ENCODE measurements at regions of chr5 and their contacts with region 1.

Region 1: DNA sequence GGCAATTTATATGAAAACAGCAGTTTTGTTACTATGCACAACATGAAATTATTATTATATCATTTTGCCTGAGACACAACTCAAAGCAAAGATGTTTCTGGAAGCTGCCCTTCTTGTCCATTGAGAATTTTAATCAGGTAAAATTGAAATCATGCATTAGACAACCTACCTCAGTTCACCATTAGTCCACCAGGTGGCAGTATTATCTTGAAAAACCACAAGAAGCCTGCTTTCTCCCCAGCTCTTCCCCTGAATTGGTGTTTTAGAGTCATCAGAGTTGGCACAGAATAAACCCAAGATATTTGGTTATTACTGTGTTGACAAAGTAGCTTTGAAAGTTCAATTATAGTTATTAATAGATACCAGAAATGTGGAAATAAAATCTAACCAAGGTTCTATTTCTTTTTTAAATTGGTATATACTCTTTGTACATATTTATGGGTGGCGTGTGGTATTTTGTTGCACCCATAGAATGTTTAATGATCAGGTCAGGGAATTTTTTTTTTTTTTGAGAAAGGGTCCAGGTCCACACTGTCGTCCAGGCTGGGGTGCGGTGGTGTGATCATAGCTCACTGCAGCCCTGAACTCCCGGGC is 25.7 kb downstream of the UTP15 start:
- DNase-seq: peak in 7 of 9 donors; percentile 46 to 71 (median 61)
- ATAC-seq: peak; percentile 82
- H3K4me3 ChIP-seq: no peak overlapping the region
- H3K4me3 Mint-ChIP-seq: no peak overlapping the region
- H3K27ac ChIP-seq: no peak overlapping the region
- H3K27ac Mint-ChIP-seq: no peak overlapping the region
- H3K4me1 ChIP-seq: no peaks in the 10 kb centered on the region
- H3K4me1 Mint-ChIP-seq: no peaks in the 10 kb centered on the region
- H3K27me3 ChIP-seq: no peaks in the 10 kb centered on the region
- H3K27me3 Mint-ChIP-seq: peaks cover 0 to 2% (median 0%) of the 10 kb centered on the region in 5 donors

Region 2: DNA sequence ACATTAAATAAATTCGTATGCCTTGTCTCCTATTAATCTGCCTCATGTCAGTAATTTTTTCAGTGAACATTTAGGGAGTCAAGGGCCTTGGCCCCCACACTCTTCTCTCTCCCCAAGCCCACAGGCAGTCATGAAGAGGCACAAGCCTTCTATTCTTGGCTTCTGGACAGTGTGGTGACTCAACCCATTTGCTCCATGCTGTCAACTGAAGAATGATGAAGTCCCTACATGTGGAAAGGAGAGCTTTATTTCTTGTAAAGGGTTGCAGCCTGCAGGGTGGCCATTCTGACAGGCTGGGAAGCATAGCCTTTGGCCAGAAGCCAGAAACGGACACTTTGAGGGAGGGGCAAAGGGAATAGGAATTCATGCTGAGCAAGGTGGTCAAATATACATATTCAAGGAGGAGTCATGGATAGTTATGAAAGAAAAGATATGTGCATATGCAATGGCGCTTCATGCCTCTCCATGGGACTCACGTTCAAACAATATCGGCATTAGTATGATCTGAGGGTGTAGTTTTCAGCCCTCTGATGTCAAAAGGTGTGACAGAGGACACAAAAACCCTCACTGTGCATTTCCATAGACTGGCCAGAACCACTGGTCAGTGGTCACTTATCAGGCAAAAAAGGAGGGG is 57.1 kb before region 1 on chr5:
- CTCF ChIA-PET with region 1: no interaction called
- POLR2A ChIA-PET with region 1: no interaction called
- intact Hi-C with region 1: no loop called
- DNase-seq: no peak
- ATAC-seq: no peak
- H3K4me3 ChIP-seq: no peak overlapping the region
- H3K4me3 Mint-ChIP-seq: no peak overlapping the region
- H3K27ac ChIP-seq: no peak overlapping the region
- H3K27ac Mint-ChIP-seq: no peak overlapping the region
- H3K4me1 ChIP-seq: no peaks in the 10 kb centered on the region
- H3K4me1 Mint-ChIP-seq: peaks cover 0 to 3% (median 0%) of the 10 kb centered on the region in 7 donors
- H3K27me3 ChIP-seq: no peaks in the 10 kb centered on the region
- H3K27me3 Mint-ChIP-seq: peaks cover 7 to 45% (median 21%) of the 10 kb centered on the region in 5 donors

Region 3: DNA sequence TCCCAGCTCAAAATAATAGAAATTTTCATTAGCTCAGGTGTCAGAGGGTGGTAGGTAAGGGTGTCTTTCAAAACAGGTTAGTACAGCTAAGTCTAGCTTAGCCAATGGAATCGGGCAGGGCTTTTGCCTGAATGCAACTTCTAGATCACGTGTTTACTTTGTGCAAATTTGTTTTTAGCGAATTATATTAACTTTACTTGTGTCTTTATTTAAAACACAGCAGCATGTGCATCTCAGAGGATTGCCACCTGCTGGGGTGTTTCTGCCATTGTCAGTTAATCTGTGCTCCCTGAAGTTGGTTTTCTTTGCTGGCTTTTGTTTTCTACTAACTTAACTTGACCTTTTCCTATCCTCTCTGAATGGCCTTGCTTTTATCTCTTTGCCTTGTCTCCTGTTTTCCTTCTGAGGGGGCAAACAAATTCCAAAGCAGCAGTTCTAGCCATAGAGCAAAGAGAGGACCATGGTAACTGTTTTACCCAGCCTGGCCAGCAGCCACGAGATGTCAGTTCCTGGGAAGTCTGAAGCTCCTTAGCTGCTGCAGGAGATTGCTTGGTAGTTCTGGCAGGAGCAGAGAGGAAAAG is 102.4 kb after region 1 on chr5:
- CTCF ChIA-PET with region 1: interaction called, 3 read pairs
- POLR2A ChIA-PET with region 1: no interaction called
- intact Hi-C with region 1: loop called in 1 of 2 experiments (anchors 5 kb)
- DNase-seq: peak in 1 of 9 donors; percentile 1
- ATAC-seq: no peak
- H3K4me3 ChIP-seq: no peak overlapping the region
- H3K4me3 Mint-ChIP-seq: no peak overlapping the region
- H3K27ac ChIP-seq: no peak overlapping the region
- H3K27ac Mint-ChIP-seq: no peak overlapping the region
- H3K4me1 ChIP-seq: peaks cover 0 to 6% of the 10 kb centered on the region in 2 donors
- H3K4me1 Mint-ChIP-seq: peaks cover 0 to 17% (median 0%) of the 10 kb centered on the region in 7 donors
- H3K27me3 ChIP-seq: no peaks in the 10 kb centered on the region
- H3K27me3 Mint-ChIP-seq: peaks cover 6 to 36% (median 23%) of the 10 kb centered on the region in 5 donors

Region 4: DNA sequence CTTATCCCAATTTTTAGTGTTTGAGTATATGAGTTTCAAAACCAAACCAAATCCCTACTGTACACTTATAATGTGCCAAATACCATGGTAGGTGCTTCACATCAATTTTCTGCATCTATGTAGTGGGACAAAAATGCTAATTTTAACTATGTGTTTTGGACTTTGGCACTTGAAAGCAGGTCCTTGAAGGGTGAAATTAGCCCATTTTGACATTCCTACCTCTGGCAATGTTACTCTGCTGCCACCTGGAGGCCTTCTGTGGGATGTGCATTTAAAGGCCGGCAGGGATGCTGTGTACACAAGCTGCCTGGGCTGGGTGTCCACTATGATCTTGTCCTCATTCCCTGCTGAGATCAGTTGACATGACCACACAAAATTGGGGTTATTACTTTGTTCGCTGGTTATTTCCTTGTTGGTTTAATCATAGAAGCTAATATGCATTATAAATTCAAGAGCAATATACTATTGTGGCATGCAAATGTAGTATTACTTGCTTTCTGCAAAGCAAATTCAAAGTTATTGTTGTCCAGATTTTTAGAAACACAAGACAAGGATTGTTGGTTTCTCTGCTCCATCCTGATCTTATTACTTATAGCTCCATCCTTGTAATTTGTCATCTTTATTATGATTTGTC is 201.6 kb after region 1 on chr5:
- CTCF ChIA-PET with region 1: interaction called, 44 read pairs
- POLR2A ChIA-PET with region 1: no interaction called
- intact Hi-C with region 1: loop called in 1 of 2 experiments (anchors 1 kb)
- DNase-seq: peak in 8 of 9 donors; percentile 37 to 62 (median 46)
- ATAC-seq: peak; percentile 83
- H3K4me3 ChIP-seq: no peak overlapping the region
- H3K4me3 Mint-ChIP-seq: no peak overlapping the region
- H3K27ac ChIP-seq: no peak overlapping the region
- H3K27ac Mint-ChIP-seq: no peak overlapping the region
- H3K4me1 ChIP-seq: no peaks in the 10 kb centered on the region
- H3K4me1 Mint-ChIP-seq: peaks cover 0 to 8% (median 3%) of the 10 kb centered on the region in 7 donors
- H3K27me3 ChIP-seq: no peaks in the 10 kb centered on the region
- H3K27me3 Mint-ChIP-seq: peaks cover 10 to 42% (median 31%) of the 10 kb centered on the region in 5 donors

Region 5: DNA sequence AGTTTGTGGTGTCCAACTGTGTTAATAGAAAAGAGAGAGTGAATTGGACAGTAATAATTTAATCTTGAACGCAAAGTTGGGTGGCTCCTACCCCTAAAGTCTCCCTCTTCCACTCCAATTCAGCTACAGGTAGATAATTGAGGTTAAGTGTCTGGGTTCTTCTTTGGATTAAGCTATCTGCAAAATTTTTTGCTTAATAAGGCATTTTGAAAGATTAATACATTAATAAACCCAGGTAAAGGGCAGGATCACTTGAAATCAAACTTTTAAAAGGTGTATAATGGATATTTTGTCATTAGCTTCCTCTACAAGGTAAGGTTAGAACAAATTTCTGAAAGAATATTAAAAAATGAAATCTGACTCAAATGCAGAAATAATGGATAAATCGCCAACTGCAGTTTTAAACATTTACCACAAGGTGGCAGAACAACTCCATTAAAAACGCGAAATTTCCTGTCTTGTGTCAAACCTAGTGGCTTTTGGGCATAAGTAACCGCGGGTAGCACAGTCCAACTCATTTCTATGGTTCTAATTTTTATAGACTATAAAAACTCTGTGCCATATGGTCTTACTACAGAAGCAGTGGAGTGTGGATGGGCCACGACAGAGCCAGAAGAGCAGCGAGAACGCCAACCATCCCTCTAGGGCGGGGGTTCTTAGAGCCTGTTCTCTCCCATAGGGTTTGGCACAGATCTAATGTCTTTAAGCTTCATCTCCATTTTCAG is 311.3 kb after region 1 on chr5:
- CTCF ChIA-PET with region 1: interaction called, 3 read pairs
- POLR2A ChIA-PET with region 1: no interaction called
- intact Hi-C with region 1: loop called in 1 of 2 experiments (anchors 5 kb)
- DNase-seq: peak in 7 of 9 donors; percentile 10 to 56 (median 51)
- ATAC-seq: no peak
- H3K4me3 ChIP-seq: no peak overlapping the region
- H3K4me3 Mint-ChIP-seq: no peak overlapping the region
- H3K27ac ChIP-seq: no peak overlapping the region
- H3K27ac Mint-ChIP-seq: no peak overlapping the region
- H3K4me1 ChIP-seq: no peaks in the 10 kb centered on the region
- H3K4me1 Mint-ChIP-seq: peaks cover 0 to 5% (median 0%) of the 10 kb centered on the region in 7 donors
- H3K27me3 ChIP-seq: no peaks in the 10 kb centered on the region
- H3K27me3 Mint-ChIP-seq: peaks cover 9 to 35% (median 29%) of the 10 kb centered on the region in 5 donors

Region 6: DNA sequence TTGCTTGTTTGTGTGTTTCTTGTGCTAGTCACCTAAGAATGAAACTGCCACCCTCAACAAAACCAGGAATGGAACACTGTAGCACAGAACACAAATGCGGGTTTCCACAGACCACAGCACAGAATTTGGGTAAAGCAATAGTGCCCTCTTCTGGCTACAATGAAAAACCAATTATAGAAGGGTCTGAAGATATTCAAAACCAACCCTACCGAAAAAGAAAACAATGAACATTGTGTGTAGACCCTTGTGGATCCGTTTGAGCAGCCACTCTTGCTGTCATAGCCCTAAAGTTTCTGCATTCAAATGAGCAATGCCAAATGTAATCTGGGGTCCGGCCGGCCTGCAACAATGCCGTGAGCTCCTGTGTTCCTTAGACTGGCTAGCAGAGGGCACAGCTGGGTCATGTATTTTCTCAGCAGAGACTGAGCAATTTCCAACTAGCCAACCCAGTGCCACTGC is 1057.7 kb after region 1 on chr5:
- CTCF ChIA-PET with region 1: no interaction called
- POLR2A ChIA-PET with region 1: no interaction called
- intact Hi-C with region 1: loop called in 1 of 2 experiments (anchors 2 kb)
- DNase-seq: peak in 8 of 9 donors; percentile 22 to 64 (median 52)
- ATAC-seq: peak; percentile 89
- H3K4me3 ChIP-seq: no peak overlapping the region
- H3K4me3 Mint-ChIP-seq: no peak overlapping the region
- H3K27ac ChIP-seq: no peak overlapping the region
- H3K27ac Mint-ChIP-seq: no peak overlapping the region
- H3K4me1 ChIP-seq: no peaks in the 10 kb centered on the region
- H3K4me1 Mint-ChIP-seq: peaks cover 0 to 7% (median 0%) of the 10 kb centered on the region in 7 donors
- H3K27me3 ChIP-seq: no peaks in the 10 kb centered on the region
- H3K27me3 Mint-ChIP-seq: peaks cover 0 to 36% (median 5%) of the 10 kb centered on the region in 5 donors

Measured in naive thymus-derived CD4-positive, alpha-beta T cell (primary cell).